ENCODE measurements at regions of chr11 and their contacts with region 1.

Region 1: GRCh38 chr11:9015677-9016076 is 11.9 kb upstream of the NRIP3 start:
- DNase-seq: peak in 9 of 10 donors; percentile 37 to 93 (median 66)

Region 2: GRCh38 chr11:9060700-9061111 is 45.0 kb after region 1 on chr11:
- intact Hi-C with region 1: no loop called
- DNase-seq: no peak

Region 3: DNA sequence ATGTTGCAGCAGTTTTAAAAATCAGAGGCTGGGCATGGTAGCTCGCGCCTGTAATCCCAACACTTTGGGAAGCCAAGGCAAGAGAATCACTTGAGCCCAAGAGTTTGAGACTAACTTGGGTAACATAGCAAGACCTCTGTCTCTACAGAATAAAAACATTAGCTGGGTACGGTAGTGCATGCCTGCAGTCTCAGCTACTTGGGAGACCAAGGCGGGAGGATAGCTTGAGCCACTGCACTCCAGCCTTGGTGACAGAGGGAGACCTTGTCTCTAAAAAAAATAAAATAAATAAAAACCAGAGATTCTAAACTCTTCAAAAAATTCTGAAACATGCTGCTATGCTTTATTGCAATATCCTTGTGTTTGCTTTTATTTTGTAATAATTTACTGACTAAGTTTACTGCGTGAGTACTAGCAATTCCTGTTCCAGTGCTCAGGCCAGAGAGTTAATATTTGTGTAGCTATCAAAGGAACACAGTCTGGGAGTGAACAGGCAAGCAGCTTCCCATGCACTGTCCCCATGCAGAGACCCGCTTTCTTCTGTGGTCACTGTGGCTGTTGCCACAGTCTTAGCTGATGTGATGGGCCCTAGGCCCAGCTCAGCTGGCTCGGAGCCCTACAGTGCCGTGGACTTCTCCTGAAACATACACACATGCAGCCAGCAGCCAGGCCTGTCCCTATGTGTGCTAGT is 87.7 kb after region 1 on chr11:
- intact Hi-C with region 1: no loop called
- DNase-seq: no peak

Region 4: GRCh38 chr11:9137293-9138132 is 121.8 kb after region 1 on chr11:
- intact Hi-C with region 1: loop called (anchors 2 kb)
- DNase-seq: peak; percentile 61 to 97 (median 82)

Region 5: DNA sequence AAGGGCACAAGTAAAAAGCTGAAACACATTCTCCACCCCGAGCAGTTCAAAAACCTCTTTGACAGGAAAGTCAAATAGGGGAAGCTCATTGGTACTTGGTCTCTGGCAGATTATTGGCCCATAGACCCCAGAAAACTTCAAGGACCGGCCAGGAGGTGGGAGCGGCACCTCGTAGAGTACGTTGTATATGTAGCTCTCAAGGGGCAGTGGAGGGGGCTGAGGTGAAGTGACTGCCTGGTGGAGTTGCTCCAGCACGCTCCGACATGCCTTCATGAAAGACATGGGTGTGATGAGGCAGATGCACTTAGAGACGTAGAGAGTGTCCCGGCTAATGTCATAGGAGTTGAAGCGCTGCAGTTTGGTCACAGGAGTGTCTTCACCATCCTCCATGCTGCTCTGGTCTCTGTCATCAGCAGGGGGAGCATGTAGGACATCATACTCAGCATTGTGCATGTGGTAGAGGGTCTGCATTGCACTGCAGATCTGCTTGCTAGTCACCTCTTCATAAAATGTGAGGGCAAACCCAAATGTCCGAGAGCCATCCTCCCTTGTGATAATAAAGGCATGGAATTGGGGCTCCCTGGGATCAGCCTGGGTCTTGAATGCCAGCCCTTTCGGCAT is 188.1 kb after region 1 on chr11:
- intact Hi-C with region 1: no loop called
- DNase-seq: peak in 6 of 10 donors; percentile 13 to 69 (median 28)

Region 6: DNA sequence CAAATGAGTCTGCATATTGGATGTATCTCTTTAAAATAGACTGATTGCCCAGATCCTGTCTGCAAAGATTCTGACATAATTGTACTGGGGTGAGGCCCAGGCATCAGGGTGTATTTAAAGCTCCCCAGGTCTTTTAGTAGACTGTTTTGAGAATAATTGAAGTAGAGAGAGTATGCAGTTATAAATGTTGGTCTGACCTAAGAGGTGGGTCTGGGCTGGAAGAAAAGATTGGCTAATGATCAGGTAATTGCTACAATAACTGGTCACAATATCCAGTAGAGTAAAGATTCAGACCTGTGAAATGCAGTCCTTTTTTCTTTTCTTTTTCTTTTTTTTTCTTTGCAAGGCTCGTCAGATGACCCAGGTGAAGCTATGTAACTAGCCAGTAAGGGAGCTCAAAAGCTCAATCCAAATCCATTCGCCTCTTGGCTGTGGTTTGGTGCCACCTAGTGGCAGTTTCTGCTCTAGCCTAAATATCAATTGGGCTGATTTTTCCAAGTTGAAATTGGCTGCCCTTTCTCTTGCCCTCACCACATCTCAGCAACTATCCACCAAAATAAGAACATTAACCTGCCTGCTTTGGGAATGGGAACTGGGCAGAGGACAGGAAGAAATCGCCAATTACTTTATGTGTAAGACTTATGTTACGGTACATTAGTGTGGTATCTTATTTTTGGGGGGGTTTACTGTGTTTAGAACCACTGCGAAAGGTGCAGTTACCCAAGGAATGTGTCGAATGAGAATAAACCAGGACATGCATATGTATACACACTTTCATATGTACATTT is 491.0 kb after region 1 on chr11:
- intact Hi-C with region 1: loop called (anchors 5 kb)
- DNase-seq: peak in 8 of 10 donors; percentile 23 to 92 (median 71)

Measured in posterior cingulate gyrus (tissue), 11 donors.